Activated CD8-positive, alpha-beta T cell treated with anti-CD3 and anti-CD28 coated beads, Interleukin-2, amount 10 ng/mL, durations not matched to agents 7 days and 5 days (primary cell): ENCODE measurements at regions of chr17 and their contacts with region 1.

Region 1: DNA sequence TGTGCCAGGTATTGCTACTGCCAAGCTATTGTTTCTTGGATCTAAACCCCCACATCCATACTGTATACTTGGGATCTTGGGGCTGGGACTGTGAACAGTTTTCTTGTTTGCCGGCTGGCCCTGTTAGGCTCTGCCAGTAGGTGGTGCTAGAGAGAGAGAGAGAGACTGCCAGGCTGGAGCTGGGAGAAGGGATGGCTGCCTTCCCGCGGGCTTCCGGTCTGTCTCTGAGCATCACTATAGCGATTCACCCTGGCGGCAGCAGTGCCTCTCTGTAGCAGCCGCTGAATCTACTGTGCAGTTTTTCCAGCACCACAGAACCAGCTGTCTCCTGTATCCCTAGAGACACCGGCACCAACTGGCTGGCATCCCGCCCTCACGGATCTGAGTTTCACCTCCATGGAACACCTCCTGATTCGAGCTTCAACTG is 201.2 kb downstream of the UTP18 start:
- DNase-seq: peak; percentile 69
- ATAC-seq: peak; percentile 79
- H3K4me3 Mint-ChIP-seq: no peak overlapping the region
- H3K27ac Mint-ChIP-seq: no peak overlapping the region
- H3K4me1 Mint-ChIP-seq: no peaks in the 10 kb centered on the region
- H3K27me3 Mint-ChIP-seq: peaks cover 3% of the 10 kb centered on the region

Region 2: DNA sequence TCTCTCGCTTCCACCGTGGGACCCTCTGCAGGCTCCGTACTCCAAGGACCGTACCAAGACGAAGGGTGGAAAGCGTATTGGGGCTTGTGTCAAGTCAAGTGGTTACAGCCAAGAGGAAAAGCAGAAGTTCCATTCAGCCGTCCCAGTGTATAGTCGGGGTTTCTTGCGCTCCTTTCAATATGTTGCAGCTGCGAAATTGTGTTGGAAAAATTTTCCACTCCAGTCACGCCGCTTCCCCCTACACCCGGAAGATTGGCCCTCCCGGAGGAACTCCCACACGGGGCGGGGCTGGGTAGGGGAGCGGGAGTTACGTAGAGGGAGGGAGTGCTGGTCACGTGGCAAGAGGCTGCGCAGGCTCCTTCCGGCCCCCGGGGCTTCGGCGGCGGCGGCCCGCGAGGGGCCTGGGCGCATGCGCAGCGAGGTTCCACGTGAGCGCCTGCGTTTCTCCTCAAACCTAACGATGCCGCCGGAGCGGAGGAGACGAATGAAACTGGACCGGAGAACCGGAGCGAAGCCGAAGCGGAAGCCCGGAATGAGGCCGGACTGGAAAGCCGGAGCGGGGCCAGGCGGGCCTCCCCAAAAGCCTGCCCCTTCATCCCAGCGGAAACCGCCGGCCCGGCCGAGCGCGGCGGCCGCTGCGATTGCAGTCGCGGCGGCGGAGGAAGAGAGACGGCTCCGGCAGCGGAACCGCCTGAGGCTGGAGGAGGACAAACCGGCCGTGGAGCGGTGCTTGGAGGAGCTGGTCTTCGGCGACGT is 201.3 kb before region 1 on chr17 and contains the start of gene UTP18:
- CTCF ChIA-PET with region 1: no interaction called
- POLR2A ChIA-PET with region 1: no interaction called
- DNase-seq: peak; percentile 97
- ATAC-seq: peak; percentile 84
- H3K4me3 Mint-ChIP-seq: peak within 1 kb of the TSS; percentile 88
- H3K27ac Mint-ChIP-seq: peak within 1 kb of the TSS; percentile 99
- H3K4me1 Mint-ChIP-seq: peaks cover 60% of the 10 kb centered on the region
- H3K27me3 Mint-ChIP-seq: no peaks in the 10 kb centered on the region
- total RNA-seq, gene UTP18: 47.4 to 52.1 TPM

Region 3: GRCh38 chr17:51355441-51356410 is 105.9 kb before region 1 on chr17:
- CTCF ChIA-PET with region 1: no interaction called
- POLR2A ChIA-PET with region 1: no interaction called
- DNase-seq: no peak
- ATAC-seq: no peak
- H3K4me3 Mint-ChIP-seq: no peak overlapping the region
- H3K27ac Mint-ChIP-seq: no peak overlapping the region
- H3K4me1 Mint-ChIP-seq: no peaks in the 10 kb centered on the region
- H3K27me3 Mint-ChIP-seq: peaks cover 32% of the 10 kb centered on the region

Region 4: DNA sequence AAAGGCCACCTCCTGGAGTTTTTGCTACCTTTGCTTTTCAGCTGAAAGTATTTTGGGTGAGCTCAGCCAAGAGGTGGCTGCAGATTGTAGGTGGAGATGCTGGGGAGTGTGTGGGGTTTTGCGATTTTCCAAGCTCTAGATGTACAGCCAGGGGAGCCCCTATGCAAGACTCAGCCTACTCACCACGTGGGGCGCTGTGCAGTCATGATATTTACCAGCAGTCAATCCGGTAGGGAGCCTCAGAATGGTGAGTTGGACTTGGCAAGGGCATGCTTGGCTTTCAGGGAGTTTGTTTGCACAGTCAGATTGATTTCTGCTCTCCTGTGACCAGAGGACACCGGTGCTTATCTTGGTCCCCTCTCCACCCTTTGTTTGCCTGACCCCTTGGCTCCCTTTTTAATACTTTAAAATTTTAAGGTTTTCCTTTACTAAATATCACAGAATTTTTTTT is 25.9 kb before region 1 on chr17:
- CTCF ChIA-PET with region 1: interaction called, 10 read pairs
- POLR2A ChIA-PET with region 1: no interaction called
- DNase-seq: no peak
- ATAC-seq: no peak
- H3K4me3 Mint-ChIP-seq: no peak overlapping the region
- H3K27ac Mint-ChIP-seq: no peak overlapping the region
- H3K4me1 Mint-ChIP-seq: peaks cover 19% of the 10 kb centered on the region
- H3K27me3 Mint-ChIP-seq: no peaks in the 10 kb centered on the region

Region 5: GRCh38 chr17:51499897-51500296 is 38.3 kb after region 1 on chr17:
- CTCF ChIA-PET with region 1: no interaction called
- POLR2A ChIA-PET with region 1: no interaction called
- DNase-seq: no peak
- ATAC-seq: no peak
- H3K4me3 Mint-ChIP-seq: no peak overlapping the region
- H3K27ac Mint-ChIP-seq: no peak overlapping the region
- H3K4me1 Mint-ChIP-seq: no peaks in the 10 kb centered on the region
- H3K27me3 Mint-ChIP-seq: peaks cover 12% of the 10 kb centered on the region

Region 6: GRCh38 chr17:51548125-51548524 is 86.5 kb after region 1 on chr17:
- CTCF ChIA-PET with region 1: no interaction called
- POLR2A ChIA-PET with region 1: no interaction called
- DNase-seq: no peak
- ATAC-seq: no peak
- H3K4me3 Mint-ChIP-seq: no peak overlapping the region
- H3K27ac Mint-ChIP-seq: no peak overlapping the region
- H3K4me1 Mint-ChIP-seq: no peaks in the 10 kb centered on the region
- H3K27me3 Mint-ChIP-seq: peaks cover 2% of the 10 kb centered on the region